ENCODE measurements at regions of chr3 and their contacts with region 1.

Region 1: GRCh38 chr3:48273594-48274211 is 32.8 kb downstream of the ZNF589 start:
- DNase-seq: peak; percentile 42 to 85
- H3K4me3 ChIP-seq: no peak overlapping the region
- CTCF ChIP-seq: peak in 1 of 3 donors; percentile 78
- POLR2A ChIP-seq: no peak

Region 2: DNA sequence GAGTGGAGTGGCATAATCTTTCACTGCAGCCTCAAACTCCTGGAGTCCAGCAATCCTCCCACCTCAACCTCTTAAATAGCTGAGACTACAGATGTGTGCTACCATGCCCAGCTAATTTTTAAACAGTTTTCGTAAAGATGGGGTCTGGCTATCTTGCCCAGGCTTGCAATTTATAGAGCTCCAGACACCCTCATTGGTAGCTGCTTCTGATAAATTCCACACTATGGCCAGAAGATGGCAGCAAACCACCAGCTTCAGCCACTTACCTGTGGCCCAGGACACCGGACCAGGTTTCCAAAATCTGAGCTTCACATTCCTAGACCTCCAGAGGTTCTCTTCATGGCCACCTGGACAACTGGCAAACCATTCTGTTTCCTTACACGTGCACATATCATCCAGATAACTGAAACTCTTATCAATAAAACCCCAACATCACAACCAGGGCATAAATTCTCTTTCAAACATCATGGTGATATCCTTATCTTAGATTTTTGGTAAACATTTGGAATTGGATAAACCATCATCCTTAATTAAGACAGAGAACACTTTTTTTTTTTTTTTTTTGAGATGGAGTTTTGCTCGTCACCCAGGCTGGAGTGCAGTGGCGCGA is 127.2 kb after region 1 on chr3:
- intact Hi-C with region 1: loop called (anchors 5 kb)
- DNase-seq: peak; percentile 59 to 85
- H3K4me3 ChIP-seq: no peak overlapping the region
- CTCF ChIP-seq: no peak
- POLR2A ChIP-seq: no peak

Region 3: GRCh38 chr3:48556793-48557626 is 283.3 kb after region 1 on chr3 and contains the start of gene PFKFB4:
- intact Hi-C with region 1: loop called (anchors 10 kb)
- DNase-seq: peak; percentile 99 to 100
- H3K4me3 ChIP-seq: peak within 1 kb of the TSS; percentile 34
- CTCF ChIP-seq: no peak
- POLR2A ChIP-seq: no peak
- total RNA-seq, gene PFKFB4: 3.7 to 8.8 (median 6.4) TPM